SK-N-SH (cell line): ENCODE measurements at regions of chrX and their contacts with region 1.

Region 1: DNA sequence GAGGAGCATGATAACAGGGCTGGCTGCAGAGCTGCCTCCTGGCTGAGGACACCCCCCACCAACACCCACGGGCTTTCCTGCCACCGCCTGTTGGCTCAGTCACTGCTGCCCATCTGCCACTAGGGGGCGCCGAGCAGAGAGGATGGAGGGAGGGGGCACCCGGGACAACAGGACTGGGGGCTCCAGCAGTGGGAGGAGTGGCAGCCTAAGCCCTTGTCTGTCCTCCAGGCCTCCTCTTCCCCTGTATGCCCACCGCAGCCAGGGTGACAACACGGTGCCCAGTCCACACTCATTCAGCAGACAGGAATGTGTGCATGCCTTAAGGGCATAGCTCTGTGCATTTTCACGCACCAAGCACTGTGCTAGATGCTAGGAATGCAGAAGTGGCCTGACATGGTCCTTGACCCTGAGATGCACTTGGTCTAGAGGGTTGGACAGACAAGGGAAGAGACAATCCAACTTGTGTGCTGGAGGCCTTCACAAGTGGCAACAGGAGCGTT is 149.9 kb downstream of the AMMECR1 start:
- DNase-seq: peak; percentile 43
- H3K4me3 ChIP-seq: no peak overlapping the region
- H3K27ac ChIP-seq: no peak overlapping the region
- H3K4me1 ChIP-seq: no peaks in the 10 kb centered on the region; a peak in 1 of 4 replicates
- H3K27me3 ChIP-seq: no peaks in the 10 kb centered on the region
- CTCF ChIP-seq: peak; percentile 68
- EP300 ChIP-seq: no peak
- RAD21 ChIP-seq: peak; percentile 32

Region 2: GRCh38 chrX:110412971-110413721 is 245.1 kb after region 1 on chrX:
- CTCF ChIA-PET with region 1: interaction called, 315 read pairs
- POLR2A ChIA-PET with region 1: no interaction called
- DNase-seq: peak; percentile 74
- H3K4me3 ChIP-seq: peak overlapping the region; percentile 12 to 17; a peak in 3 of 4 replicates
- H3K27ac ChIP-seq: no peak overlapping the region; a peak in 1 of 4 replicates
- H3K4me1 ChIP-seq: peaks cover 0 to 11% of the 10 kb centered on the region in 2 experiments; a peak in 1 of 4 replicates
- H3K27me3 ChIP-seq: no peaks in the 10 kb centered on the region
- CTCF ChIP-seq: peak; percentile 87
- EP300 ChIP-seq: no peak
- RAD21 ChIP-seq: peak; percentile 72